ENCODE measurements at regions of chr5 and their contacts with region 1.

Region 1: GRCh38 chr5:119527351-119527750 is 75.1 kb downstream of the HSD17B4 start:
- DNase-seq: peak; percentile 36
- ATAC-seq: no peak; the same call in 1 of the 2 replicates
- H3K4me3 ChIP-seq: no peak overlapping the region
- H3K27ac ChIP-seq: no peak overlapping the region
- H3K4me1 ChIP-seq: peaks cover 2% of the 10 kb centered on the region; the same call in 1 of the 2 replicates
- H3K27me3 ChIP-seq: no peaks in the 10 kb centered on the region
- CTCF ChIP-seq: no peak
- POLR2A ChIP-seq: no peak
- RAD21 ChIP-seq: no peak

Region 2: DNA sequence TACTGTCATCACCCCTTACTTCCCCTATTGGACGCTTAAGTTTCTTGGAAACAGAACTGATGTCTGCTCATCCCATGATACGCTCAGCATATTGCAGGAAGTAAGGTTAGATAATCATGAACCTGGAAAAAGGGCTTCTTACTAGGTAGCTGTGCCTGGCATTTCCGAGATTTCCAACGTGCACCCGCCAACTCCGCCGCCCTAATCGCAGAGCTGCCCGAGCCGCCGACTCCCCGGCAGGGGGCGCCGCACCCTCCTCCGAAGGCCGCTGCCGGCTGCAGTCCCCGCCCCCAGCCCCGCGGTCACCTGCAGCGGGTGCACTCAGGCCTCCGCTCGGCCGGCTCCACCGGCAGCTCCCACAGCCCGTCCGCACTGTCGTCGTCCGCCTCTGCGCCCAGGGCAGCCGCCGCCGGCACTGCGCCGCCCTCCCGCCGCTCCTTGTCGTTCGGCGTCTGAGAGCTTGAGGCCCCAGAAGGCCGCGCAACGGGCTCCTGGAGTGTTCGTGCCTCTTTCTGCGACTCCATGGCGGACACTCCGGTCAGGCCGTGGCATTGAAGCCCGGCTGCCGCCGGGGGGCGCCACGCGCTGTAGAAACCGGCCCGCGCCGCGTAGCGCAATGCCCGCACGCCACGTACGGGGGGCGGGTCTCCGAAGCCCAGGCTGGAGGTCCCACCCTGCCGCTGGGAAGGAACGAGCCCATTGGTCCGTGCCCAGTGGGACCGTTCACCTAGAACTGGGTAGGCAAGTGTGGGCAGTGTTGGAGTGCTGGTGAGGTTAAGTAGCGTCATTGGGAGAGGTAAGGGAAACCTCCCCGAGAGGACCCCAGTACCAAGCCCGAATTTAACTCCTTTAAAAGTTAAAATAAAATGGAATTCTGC is 539.1 kb before region 1 on chr5 and contains the start of gene DTWD2:
- CTCF ChIA-PET with region 1: no interaction called
- POLR2A ChIA-PET with region 1: no interaction called
- dilution Hi-C with region 1: no loop called
- in situ Hi-C with region 1: no loop called
- intact Hi-C with region 1: no loop called
- DNase-seq: peak; percentile 88
- ATAC-seq: peak; percentile 98
- H3K4me3 ChIP-seq: peak within 1 kb of the TSS; percentile 66
- H3K27ac ChIP-seq: peak within 1 kb of the TSS; percentile 66
- H3K4me1 ChIP-seq: no peaks in the 10 kb centered on the region
- H3K27me3 ChIP-seq: no peaks in the 10 kb centered on the region
- CTCF ChIP-seq: peak; percentile 93
- POLR2A ChIP-seq: no peak
- RAD21 ChIP-seq: peak; percentile 82
- total RNA-seq, gene DTWD2: 1.8 and 2.5 TPM in 2 replicates

Region 3: DNA sequence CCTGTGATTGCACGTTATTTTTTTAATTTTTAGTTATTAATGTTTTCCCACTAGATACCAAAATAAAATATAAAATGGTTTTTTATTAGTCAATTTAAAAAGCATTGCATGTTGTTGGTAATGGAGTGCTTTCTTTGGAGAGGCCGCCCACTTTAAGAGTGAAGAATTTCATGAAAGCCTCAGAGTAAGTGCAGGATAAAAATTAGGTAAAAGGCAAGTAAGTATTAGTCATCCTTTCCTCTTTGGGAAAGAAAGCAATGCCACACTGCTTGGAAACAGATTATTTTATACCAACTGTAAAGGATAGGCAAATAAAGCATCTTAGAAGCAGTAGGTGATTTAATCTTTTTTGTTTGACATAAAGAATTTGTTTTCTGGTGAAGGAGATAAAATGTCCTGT is 12.2 kb before region 1 on chr5:
- CTCF ChIA-PET with region 1: no interaction called
- POLR2A ChIA-PET with region 1: interaction called, 10 read pairs
- dilution Hi-C with region 1: no loop called
- in situ Hi-C with region 1: no loop called
- intact Hi-C with region 1: no loop called
- DNase-seq: peak; percentile 45
- ATAC-seq: peak; percentile 81
- H3K4me3 ChIP-seq: no peak overlapping the region
- H3K27ac ChIP-seq: no peak overlapping the region
- H3K4me1 ChIP-seq: no peaks in the 10 kb centered on the region
- H3K27me3 ChIP-seq: no peaks in the 10 kb centered on the region
- CTCF ChIP-seq: no peak
- POLR2A ChIP-seq: no peak
- RAD21 ChIP-seq: no peak